Heart left ventricle (tissue), 16 donors: ENCODE measurements at regions of chr11 and their contacts with region 1.

Region 1: DNA sequence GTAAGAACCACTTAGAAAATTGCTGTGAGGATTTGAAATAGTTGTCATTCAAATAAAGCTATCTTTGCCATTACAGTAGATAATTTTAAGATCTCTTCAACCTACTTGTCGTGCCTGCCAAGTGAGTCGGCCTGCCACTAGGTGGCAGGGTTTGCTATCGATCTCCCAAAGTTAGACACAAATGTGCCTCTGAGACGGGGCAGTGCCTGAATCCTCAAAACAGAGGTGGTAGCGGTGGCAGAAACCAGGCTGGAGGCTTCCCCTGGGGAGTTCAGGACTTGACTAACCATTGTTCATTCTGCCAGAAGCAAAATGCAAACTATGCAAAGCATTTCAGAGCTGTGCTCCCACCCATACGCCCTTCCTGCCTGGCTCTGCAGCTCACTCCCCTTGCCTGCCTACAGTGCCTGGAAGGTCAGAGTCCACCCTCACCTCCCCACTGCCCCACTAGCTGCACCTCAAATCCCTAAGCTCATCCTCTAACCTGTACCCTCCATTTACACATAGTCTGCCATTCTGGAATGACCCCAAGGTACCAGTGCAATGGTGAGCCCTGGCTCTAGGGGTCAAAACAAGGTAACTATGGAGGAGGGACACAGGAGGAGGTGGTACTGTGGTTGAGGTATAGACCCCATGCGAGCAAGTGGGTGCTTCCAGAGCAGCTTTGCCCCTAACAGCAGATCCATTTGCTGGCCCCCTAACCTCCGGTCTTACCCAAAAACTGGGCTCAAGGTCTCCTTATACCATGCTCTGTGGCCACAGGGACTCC is 82.1 kb downstream of the C11orf58 start:
- DNase-seq: peak; percentile 79 to 89 (median 87)
- ATAC-seq: peak; percentile 64 to 80 (median 69)
- H3K4me3 ChIP-seq: no peak overlapping the region
- H3K27ac ChIP-seq: peak overlapping the region in 10 of 12 donors; percentile 19 to 77 (median 50)
- H3K4me1 ChIP-seq: peaks cover 0 to 72% (median 37%) of the 10 kb centered on the region in 12 donors
- H3K27me3 ChIP-seq: no peaks in the 10 kb centered on the region
- CTCF ChIP-seq: peak; percentile 69 to 93 (median 87)
- POLR2A ChIP-seq: no peak

Region 2: GRCh38 chr11:16881074-16881709 is 60.7 kb after region 1 on chr11:
- intact Hi-C with region 1: loop called in 9 of 10 experiments (anchors 1 to 5 kb)
- DNase-seq: peak; percentile 67 to 84 (median 72)
- ATAC-seq: peak; percentile 84 to 93 (median 90)
- H3K4me3 ChIP-seq: peak overlapping the region in 8 of 12 donors; percentile 2 to 39 (median 26)
- H3K27ac ChIP-seq: peak overlapping the region in 9 of 12 donors; percentile 17 to 74 (median 66)
- H3K4me1 ChIP-seq: peaks cover 0 to 71% (median 30%) of the 10 kb centered on the region in 12 donors
- H3K27me3 ChIP-seq: no peaks in the 10 kb centered on the region
- CTCF ChIP-seq: peak in 11 of 12 donors; percentile 22 to 68 (median 48)
- POLR2A ChIP-seq: no peak

Region 3: DNA sequence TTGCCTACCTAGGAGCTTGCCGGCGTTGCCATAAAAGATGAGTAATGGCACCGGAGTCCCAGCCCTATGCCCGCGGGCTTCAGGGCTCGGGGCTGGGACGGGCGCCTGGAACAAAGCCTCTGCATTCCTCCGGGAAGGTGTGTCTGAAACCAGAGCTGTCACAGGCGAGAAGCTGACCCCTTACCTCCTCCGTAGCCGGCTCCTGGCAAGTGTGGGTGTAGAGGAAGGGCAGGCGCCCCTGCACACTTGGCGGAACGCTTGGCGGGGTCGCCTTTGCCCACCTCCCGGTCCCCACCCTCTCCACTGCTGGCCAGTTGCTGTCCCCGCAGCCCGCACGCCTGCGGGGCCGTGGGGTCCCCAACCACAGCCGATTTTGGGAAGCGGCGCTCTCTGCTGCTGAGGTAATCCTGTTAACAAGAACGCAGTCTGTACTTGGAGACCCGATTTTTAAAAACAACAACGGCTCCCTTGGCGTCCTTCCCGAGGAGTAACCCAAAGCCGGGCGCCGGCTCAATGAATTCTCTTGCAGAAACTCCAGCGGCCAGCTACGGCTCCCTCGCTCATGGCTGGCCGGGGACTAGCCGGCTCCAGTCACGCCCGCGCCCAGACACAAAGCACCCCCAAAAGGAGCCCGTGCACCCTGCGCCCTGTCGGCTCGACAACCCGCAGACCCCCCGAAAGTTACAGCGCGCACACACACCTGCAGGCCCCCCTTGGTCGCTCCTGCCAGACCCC is 104.5 kb after region 1 on chr11:
- intact Hi-C with region 1: loop called in 5 of 10 experiments (anchors 10 kb)
- DNase-seq: peak; percentile 31 to 71 (median 62)
- ATAC-seq: peak; percentile 6 to 69 (median 52)
- H3K4me3 ChIP-seq: peak overlapping the region; percentile 37 to 79 (median 60)
- H3K27ac ChIP-seq: peak overlapping the region in 11 of 12 donors; percentile 32 to 90 (median 75)
- H3K4me1 ChIP-seq: peaks cover 0 to 51% (median 13%) of the 10 kb centered on the region in 12 donors
- H3K27me3 ChIP-seq: peaks cover 0 to 40% (median 0%) of the 10 kb centered on the region in 9 donors
- CTCF ChIP-seq: peak in 1 of 12 donors; percentile 11
- POLR2A ChIP-seq: no peak

Region 4: GRCh38 chr11:16935518-16936302 is 115.2 kb after region 1 on chr11:
- intact Hi-C with region 1: loop called in 5 of 10 experiments (anchors 2 to 10 kb)
- DNase-seq: peak in 1 of 5 donors; percentile 31
- ATAC-seq: peak in 3 of 4 donors; percentile 16 to 69 (median 40)
- H3K4me3 ChIP-seq: no peak overlapping the region
- H3K27ac ChIP-seq: peak overlapping the region in 11 of 12 donors; percentile 30 to 87 (median 64)
- H3K4me1 ChIP-seq: peaks cover 0 to 43% (median 20%) of the 10 kb centered on the region in 12 donors
- H3K27me3 ChIP-seq: no peaks in the 10 kb centered on the region
- CTCF ChIP-seq: peak; percentile 41 to 74 (median 56)
- POLR2A ChIP-seq: no peak

Region 5: DNA sequence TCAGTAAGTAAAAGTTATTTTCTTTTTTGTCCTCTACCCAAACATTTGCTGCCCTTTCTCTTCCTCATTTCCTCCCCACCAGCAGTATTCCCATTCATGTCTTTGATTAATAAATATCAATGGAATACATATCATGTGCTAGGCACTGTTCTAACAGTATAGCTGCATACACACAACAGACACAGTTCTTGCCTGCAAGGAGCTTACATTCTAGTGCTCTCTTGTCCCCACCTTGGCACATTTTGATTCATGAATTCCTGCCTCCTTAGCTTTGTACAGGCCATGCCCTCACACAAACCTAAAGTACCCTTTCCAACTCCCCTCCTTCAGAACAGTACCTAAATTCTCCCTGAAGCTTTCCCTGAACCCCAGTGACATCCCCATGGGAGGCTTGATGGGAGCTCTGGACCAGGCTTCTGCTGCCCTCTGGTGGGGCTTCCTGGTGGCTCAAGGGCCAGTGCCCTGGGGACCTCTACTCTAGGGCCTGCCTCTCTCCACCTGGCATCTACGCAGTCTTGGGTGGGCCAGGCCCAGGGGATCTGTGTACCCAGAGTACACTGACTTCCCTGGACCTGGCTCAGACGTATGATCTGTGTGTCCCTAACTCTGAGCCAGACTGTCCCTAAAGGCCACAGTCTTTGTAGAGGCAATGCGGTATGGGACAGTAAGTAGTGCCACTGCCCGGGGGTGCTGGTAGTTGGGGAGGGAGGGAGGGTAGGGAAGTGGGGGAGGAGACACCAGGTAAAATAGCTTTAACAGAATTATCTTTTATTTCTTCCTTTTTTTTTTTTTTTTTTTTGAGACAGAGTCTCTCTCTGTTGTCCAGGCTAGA is 242.9 kb after region 1 on chr11:
- intact Hi-C with region 1: loop called in 4 of 10 experiments (anchors 5 to 10 kb)
- DNase-seq: peak; percentile 57 to 79 (median 68)
- ATAC-seq: peak; percentile 55 to 96 (median 94)
- H3K4me3 ChIP-seq: no peak overlapping the region
- H3K27ac ChIP-seq: no peak overlapping the region
- H3K4me1 ChIP-seq: no peaks in the 10 kb centered on the region
- H3K27me3 ChIP-seq: no peaks in the 10 kb centered on the region
- CTCF ChIP-seq: peak; percentile 59 to 89 (median 76)
- POLR2A ChIP-seq: no peak